ENCODE measurements at regions of chr2 and their contacts with region 1.

Region 1: GRCh38 chr2:179842498-179843153 is 18.8 kb downstream of the ZNF385B start:
- DNase-seq: peak in 1 of 2 donors; percentile 11
- ATAC-seq: peak; percentile 59 to 82 (median 72)
- H3K4me3 ChIP-seq: no peak overlapping the region
- H3K27ac ChIP-seq: no peak overlapping the region
- H3K4me1 ChIP-seq: peaks cover 5% of the 10 kb centered on the region
- H3K27me3 ChIP-seq: no peaks in the 10 kb centered on the region
- CTCF ChIP-seq: peak; percentile 46

Region 2: GRCh38 chr2:179768765-179769164 is 73.9 kb before region 1 on chr2:
- intact Hi-C with region 1: no loop called
- DNase-seq: no peak
- ATAC-seq: peak; percentile 74 to 93 (median 84)
- H3K4me3 ChIP-seq: no peak overlapping the region
- H3K27ac ChIP-seq: peak overlapping the region; percentile 33
- H3K4me1 ChIP-seq: peaks cover 6% of the 10 kb centered on the region
- H3K27me3 ChIP-seq: no peaks in the 10 kb centered on the region
- CTCF ChIP-seq: no peak

Region 3: GRCh38 chr2:179805001-179805400 is 37.6 kb before region 1 on chr2:
- intact Hi-C with region 1: no loop called
- DNase-seq: no peak
- ATAC-seq: no peak
- H3K4me3 ChIP-seq: no peak overlapping the region
- H3K27ac ChIP-seq: no peak overlapping the region
- H3K4me1 ChIP-seq: no peaks in the 10 kb centered on the region
- H3K27me3 ChIP-seq: no peaks in the 10 kb centered on the region
- CTCF ChIP-seq: no peak

Region 4: GRCh38 chr2:179876266-179876665 is 33.6 kb after region 1 on chr2:
- intact Hi-C with region 1: no loop called
- DNase-seq: no peak
- ATAC-seq: no peak
- H3K4me3 ChIP-seq: no peak overlapping the region
- H3K27ac ChIP-seq: no peak overlapping the region
- H3K4me1 ChIP-seq: no peaks in the 10 kb centered on the region
- H3K27me3 ChIP-seq: no peaks in the 10 kb centered on the region
- CTCF ChIP-seq: no peak

Region 5: DNA sequence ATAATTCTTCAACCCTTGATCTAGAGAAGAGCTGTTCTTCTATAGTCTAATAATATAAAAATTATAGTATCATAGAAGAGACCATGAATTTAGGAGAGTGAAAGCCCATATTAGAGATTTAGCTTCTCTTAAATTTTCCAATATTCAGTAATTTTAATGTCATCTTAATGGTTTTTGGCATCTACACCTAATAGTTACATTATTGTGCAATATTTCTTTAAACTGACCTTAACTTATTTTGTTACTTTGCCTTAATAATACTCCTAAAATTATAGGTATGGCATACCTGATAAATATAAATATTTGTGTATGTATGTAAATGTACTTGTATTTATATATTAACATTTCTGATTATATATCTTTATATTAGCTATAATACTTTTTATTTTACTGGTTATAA is 242.5 kb after region 1 on chr2:
- intact Hi-C with region 1: loop called in 1 of 2 experiments (anchors 10 kb)
- DNase-seq: no peak
- ATAC-seq: no peak
- H3K4me3 ChIP-seq: no peak overlapping the region
- H3K27ac ChIP-seq: no peak overlapping the region
- H3K4me1 ChIP-seq: no peaks in the 10 kb centered on the region
- H3K27me3 ChIP-seq: no peaks in the 10 kb centered on the region
- CTCF ChIP-seq: no peak

Region 6: GRCh38 chr2:180376066-180376465 is 533.4 kb after region 1 on chr2:
- intact Hi-C with region 1: no loop called
- DNase-seq: no peak
- ATAC-seq: no peak
- H3K4me3 ChIP-seq: no peak overlapping the region
- H3K27ac ChIP-seq: no peak overlapping the region
- H3K4me1 ChIP-seq: no peaks in the 10 kb centered on the region
- H3K27me3 ChIP-seq: no peaks in the 10 kb centered on the region
- CTCF ChIP-seq: no peak

Measured in psoas muscle (tissue), 8 donors.